Heart right ventricle (tissue), 16 donors: ENCODE measurements at regions of chr11 and their contacts with region 1.

Region 1: DNA sequence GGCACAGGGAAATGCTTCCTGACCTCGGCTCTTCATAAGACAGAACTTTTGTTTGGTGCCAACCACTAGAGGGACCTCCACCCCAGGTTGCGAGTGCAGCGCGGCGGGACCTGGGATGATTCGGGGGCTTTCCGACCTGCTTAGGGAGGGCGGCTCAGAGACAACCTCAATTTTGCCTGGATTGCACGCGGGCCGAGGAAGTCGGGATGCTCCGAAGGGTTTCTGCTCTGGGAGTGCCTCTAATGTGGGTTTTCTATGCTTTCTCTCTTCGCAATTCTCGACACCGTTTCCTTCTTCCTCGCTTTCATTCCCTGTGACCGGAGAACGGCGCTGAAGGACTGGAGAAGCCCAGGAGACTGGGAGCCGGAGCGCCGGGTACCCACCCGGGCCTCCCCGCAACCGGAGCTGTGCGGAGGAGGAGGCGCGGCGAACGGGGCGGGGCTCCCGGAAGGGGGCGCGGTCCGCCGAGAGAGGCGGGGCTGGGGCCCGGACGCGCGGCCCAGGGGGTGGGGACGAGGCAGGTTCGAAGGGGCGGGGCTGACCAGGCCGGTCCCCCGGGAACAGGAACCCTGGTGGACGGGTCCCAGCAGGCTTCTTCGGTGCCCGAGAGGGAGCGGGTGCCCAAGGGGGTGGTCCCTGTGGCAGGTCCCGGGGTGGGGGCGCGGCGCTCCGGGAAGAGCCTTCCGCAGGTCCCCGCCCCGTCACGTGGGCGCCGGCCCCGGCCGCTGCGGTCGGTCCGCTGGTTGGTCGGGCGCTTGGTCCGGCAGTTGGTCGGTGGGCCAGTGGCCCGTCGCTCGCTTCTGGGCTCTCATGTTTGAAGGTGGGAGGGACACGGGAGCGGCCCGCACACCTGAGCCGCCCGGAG is at the start of gene PPFIBP2:
- DNase-seq: peak; percentile 81 to 88
- ATAC-seq: peak; percentile 87 to 96 (median 92)
- H3K4me3 ChIP-seq: peak within 1 kb of the TSS; percentile 56 to 89 (median 84)
- H3K27ac ChIP-seq: peak within 1 kb of the TSS; percentile 87 to 98 (median 93)
- H3K4me1 ChIP-seq: peaks cover 10 to 49% (median 37%) of the 10 kb centered on the region in 9 donors
- H3K27me3 ChIP-seq: no peaks in the 10 kb centered on the region
- CTCF ChIP-seq: peak; percentile 43 to 78 (median 63)
- total RNA-seq, gene PPFIBP2: 14.4 to 40.7 (median 21.4) TPM

Region 2: GRCh38 chr11:7548659-7549274 is 35.3 kb after region 1 on chr11:
- intact Hi-C with region 1: loop called in 1 of 10 experiments (anchors 5 kb)
- DNase-seq: no peak
- ATAC-seq: peak in 4 of 8 donors; percentile 44 to 67 (median 52)
- H3K4me3 ChIP-seq: no peak overlapping the region
- H3K27ac ChIP-seq: no peak overlapping the region
- H3K4me1 ChIP-seq: peaks cover 0 to 6% (median 1%) of the 10 kb centered on the region in 9 donors
- H3K27me3 ChIP-seq: no peaks in the 10 kb centered on the region
- CTCF ChIP-seq: peak in 3 of 9 donors; percentile 34 to 50 (median 35)

Region 3: GRCh38 chr11:7571640-7572000 is 58.2 kb after region 1 on chr11:
- intact Hi-C with region 1: loop called in 4 of 10 experiments (anchors 2 to 10 kb)
- DNase-seq: peak; percentile 56 to 64
- ATAC-seq: peak; percentile 40 to 75 (median 72)
- H3K4me3 ChIP-seq: no peak overlapping the region
- H3K27ac ChIP-seq: peak overlapping the region in 1 of 10 donors; percentile 45
- H3K4me1 ChIP-seq: peaks cover 7 to 31% (median 22%) of the 10 kb centered on the region in 9 donors
- H3K27me3 ChIP-seq: peaks cover 0 to 22% (median 0%) of the 10 kb centered on the region in 7 donors
- CTCF ChIP-seq: peak; percentile 77 to 98 (median 93)

Region 4: DNA sequence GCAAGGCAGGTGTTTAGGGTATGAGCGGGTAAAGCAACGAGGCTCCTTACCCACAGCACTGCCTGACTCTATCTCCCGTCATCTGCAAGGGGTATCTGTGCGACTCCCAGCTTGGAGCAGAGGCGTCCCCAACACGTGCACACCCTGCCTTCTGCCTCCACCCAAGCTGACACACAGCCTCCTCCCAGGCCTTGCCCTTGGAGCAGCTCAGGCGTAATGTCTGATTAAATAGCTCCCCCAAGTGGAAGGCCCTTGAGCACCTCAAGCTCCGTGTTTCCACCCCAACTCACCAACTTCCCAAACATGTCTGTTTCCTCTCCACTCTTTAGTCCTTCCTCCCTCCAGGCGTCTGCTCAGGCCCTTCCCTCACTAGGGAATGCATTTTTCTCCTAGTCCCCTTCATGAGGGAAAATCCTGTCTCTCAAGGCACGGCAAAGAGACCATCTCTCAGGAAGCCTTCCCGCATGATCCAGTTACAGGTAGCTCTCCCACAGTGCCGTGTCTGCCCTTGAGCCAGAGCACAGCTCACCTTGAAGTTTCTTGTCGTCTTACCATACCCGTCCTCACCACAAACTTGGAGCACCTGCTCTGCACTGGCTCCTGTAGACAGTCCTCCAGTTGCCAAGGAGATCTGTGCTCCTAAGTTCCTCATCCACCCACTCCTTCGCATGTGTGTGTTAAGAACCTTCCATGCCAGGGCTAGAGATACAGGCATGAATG is 144.0 kb after region 1 on chr11:
- intact Hi-C with region 1: loop called in 3 of 10 experiments (anchors 2 to 5 kb)
- DNase-seq: peak; percentile 48 to 53
- ATAC-seq: peak; percentile 87 to 95 (median 92)
- H3K4me3 ChIP-seq: no peak overlapping the region
- H3K27ac ChIP-seq: peak overlapping the region in 2 of 10 donors; percentile 71
- H3K4me1 ChIP-seq: peaks cover 0 to 19% (median 12%) of the 10 kb centered on the region in 9 donors
- H3K27me3 ChIP-seq: no peaks in the 10 kb centered on the region
- CTCF ChIP-seq: peak in 8 of 9 donors; percentile 27 to 70 (median 57)

Region 5: GRCh38 chr11:7688238-7688826 is 174.9 kb after region 1 on chr11:
- intact Hi-C with region 1: loop called in 1 of 10 experiments (anchors 10 kb)
- DNase-seq: no peak
- ATAC-seq: no peak
- H3K4me3 ChIP-seq: no peak overlapping the region
- H3K27ac ChIP-seq: no peak overlapping the region
- H3K4me1 ChIP-seq: no peaks in the 10 kb centered on the region
- H3K27me3 ChIP-seq: peaks cover 0 to 24% (median 6%) of the 10 kb centered on the region in 7 donors
- CTCF ChIP-seq: peak; percentile 41 to 82 (median 75)